Activated naive CD8-positive, alpha-beta T cell treated with anti-CD3 and anti-CD28 coated beads, Interleukin-2, amount 10 ng/mL, durations not matched to agents 7 days and 5 days (primary cell): ENCODE measurements at regions of chr2 and their contacts with region 1.

Region 1: GRCh38 chr2:65396348-65397026 is 35.9 kb downstream of the SPRED2 start:
- DNase-seq: no peak
- ATAC-seq: no peak
- H3K4me3 Mint-ChIP-seq: no peak overlapping the region
- H3K27ac Mint-ChIP-seq: no peak overlapping the region
- H3K4me1 Mint-ChIP-seq: peaks cover 23% of the 10 kb centered on the region
- H3K27me3 Mint-ChIP-seq: peaks cover 12% of the 10 kb centered on the region

Region 2: DNA sequence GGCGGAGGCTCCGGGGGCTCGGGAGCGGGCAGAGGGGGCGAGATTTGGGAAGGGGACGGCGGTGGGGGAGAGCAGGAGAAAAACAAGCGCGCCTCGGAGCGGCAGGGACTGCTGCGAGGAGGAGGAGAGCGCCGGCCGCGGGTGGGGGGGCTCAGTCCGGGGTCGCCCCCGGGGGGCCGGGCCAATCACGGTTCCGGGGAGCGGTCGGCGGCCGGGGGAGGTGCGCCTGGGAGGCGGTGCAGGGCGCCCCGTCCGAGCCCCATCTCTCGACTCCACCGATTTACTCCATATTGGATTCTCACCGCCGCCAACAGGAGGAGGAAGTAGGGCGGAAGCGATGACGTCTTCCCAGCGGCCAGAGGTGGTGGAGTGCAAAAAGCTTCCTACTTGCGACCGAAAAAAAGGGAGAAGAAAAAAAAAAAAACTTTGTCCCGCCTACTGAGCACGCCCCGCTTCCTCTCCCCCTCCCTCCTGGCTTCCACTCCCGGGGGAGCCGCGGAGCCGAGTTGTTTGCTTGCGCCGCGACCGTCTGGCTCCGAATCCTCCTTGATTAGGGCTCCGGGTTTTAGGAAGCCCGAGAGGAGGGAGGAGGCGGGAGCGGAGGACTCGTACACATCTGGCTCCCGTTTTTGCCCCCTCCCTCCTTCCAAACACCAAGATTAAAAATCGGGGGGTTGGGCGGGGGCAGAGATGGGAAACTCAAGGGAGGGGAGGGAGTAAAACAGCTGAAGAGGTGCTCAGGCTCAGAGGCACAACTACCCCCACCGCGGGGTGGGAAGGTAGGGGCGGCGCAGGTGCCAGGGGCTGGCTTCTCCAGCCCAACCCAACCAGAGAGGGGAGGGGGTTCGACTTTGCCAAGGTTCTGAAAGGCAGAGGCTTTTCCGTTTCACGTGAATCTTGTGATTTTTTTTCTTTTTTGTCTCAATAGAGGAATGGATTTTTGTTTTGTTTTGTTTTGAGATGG is 36.0 kb after region 1 on chr2 and contains the start of gene SPRED2:
- POLR2A ChIA-PET with region 1: interaction called, 10 read pairs
- DNase-seq: peak; percentile 77
- ATAC-seq: peak; percentile 46
- H3K4me3 Mint-ChIP-seq: peak within 1 kb of the TSS; percentile 95
- H3K27ac Mint-ChIP-seq: peak within 1 kb of the TSS; percentile 88
- H3K4me1 Mint-ChIP-seq: peaks cover 11% of the 10 kb centered on the region
- H3K27me3 Mint-ChIP-seq: peaks cover 53% of the 10 kb centered on the region
- total RNA-seq, gene SPRED2: 9.3 to 9.9 TPM